PC-3 (cell line): ENCODE measurements at regions of chr1 and their contacts with region 1.

Region 1: GRCh38 chr1:211680752-211681327 is 5.4 kb upstream of the NEK2 start:
- DNase-seq: peak; percentile 94
- ATAC-seq: peak; percentile 90
- H3K4me3 ChIP-seq: no peak overlapping the region
- H3K27ac ChIP-seq: no peak overlapping the region
- H3K4me1 ChIP-seq: peaks cover 7% of the 10 kb centered on the region; the same call in 1 of the 2 replicates
- H3K27me3 ChIP-seq: no peaks in the 10 kb centered on the region
- CTCF ChIP-seq: peak; percentile 91

Region 2: GRCh38 chr1:211574705-211575104 is 106.1 kb before region 1 on chr1:
- CTCF ChIA-PET with region 1: no interaction called
- POLR2A ChIA-PET with region 1: no interaction called
- intact Hi-C with region 1: no loop called
- DNase-seq: peak; percentile 58
- ATAC-seq: no peak
- H3K4me3 ChIP-seq: peak overlapping the region; percentile 0; the same call in 1 of the 2 replicates
- H3K27ac ChIP-seq: no peak overlapping the region
- H3K4me1 ChIP-seq: peaks cover 31% of the 10 kb centered on the region
- H3K27me3 ChIP-seq: no peaks in the 10 kb centered on the region
- CTCF ChIP-seq: no peak

Region 3: DNA sequence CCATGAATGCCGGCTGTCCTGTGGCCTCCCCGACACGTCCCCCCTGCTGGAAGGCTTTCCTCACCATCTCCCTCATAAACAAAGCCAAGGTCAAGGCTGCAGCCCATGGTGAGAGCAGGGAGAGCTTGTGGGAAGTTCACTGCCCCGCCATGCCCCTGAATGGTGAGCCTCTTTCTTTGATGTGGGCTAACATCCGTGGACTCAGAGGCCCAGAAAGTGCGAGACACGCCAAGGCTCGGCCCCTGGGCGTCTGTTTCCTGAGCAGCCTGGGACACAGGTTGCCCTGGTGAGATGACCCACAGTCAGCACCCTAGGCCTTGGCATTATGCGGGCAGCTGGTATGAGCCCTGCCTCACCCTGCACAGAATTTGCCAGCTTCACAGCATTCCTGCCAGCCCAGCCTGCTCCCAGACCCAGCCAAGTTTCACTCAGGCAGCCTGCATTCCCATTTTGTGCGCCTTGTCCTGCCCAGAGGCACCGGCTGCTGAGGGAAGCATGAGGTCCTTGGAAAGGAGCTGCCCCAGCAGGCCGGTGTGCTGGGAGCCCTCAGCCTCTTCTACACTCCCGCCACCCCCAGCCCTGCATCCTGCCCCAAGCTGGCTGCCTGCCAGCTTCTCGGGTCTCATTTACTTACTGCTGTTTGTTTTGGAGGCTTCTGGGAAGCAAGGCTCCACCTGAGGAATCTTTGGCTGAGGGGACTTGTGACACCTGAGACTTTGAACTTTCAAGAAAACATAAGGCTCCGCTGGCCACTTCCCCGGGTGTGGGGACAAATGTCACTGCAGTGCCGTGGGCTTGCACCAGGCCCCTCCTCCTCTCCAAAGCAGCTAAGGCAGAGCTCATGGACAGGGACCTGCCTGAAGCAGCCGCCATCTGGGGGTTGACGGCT is 37.3 kb before region 1 on chr1:
- CTCF ChIA-PET with region 1: no interaction called
- POLR2A ChIA-PET with region 1: no interaction called
- intact Hi-C with region 1: no loop called
- DNase-seq: peak; percentile 70
- ATAC-seq: peak; percentile 59
- H3K4me3 ChIP-seq: no peak overlapping the region
- H3K27ac ChIP-seq: 0 out of 2 replicates have a peak overlapping the region, but pooled peaks have one; percentile 4
- H3K4me1 ChIP-seq: peaks cover 34% of the 10 kb centered on the region
- H3K27me3 ChIP-seq: no peaks in the 10 kb centered on the region
- CTCF ChIP-seq: no peak

Region 4: GRCh38 chr1:211830330-211831142 is 149.7 kb after region 1 on chr1 and contains the start of gene LPGAT1:
- CTCF ChIA-PET with region 1: no interaction called
- POLR2A ChIA-PET with region 1: no interaction called
- intact Hi-C with region 1: loop called (anchors 1 kb)
- DNase-seq: peak; percentile 79
- ATAC-seq: peak; percentile 91
- H3K4me3 ChIP-seq: peak within 1 kb of the TSS; percentile 84
- H3K27ac ChIP-seq: no peak within 1 kb of the TSS
- H3K4me1 ChIP-seq: peaks cover 13% of the 10 kb centered on the region; the same call in 1 of the 2 replicates
- H3K27me3 ChIP-seq: no peaks in the 10 kb centered on the region
- CTCF ChIP-seq: peak; percentile 69
- total RNA-seq, gene LPGAT1: 39.8 and 41.7 TPM in 2 replicates

Region 5: DNA sequence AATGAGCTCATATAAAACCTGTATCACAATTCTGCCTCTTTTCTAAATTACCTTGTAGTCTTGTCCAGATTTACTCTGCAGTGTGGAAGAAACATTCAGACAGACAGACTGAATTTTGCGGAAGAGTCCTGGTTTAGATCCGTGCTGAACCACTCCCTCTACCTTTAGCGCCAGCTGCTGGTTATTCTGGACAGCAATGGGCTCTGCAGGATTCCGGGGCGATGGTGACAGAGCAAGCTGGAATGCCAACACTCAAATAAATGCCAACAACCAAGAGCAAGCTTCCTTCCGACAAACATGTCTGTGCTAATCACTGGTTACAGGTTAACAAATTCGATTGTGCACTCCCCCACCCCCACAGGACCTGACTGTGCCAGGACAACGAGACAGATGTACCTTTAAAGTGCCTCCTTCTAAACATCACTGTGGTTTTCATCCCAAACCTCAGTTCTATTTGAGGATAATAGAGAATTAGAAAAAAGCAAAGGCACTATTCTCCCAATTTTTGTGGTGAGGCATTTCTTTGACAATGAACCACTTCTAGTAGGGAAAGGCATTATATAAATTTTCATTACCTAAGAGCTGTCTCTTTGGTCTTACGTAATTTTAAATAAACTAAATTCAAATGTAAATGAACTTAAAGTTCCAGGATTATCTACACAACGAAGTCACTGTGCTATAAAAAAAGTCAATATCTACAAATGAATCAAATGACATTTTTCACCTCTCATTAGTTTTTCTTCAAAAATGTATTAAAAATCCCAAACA is 264.1 kb after region 1 on chr1:
- CTCF ChIA-PET with region 1: interaction called, 15 read pairs
- POLR2A ChIA-PET with region 1: no interaction called
- intact Hi-C with region 1: loop called (anchors 1 kb)
- DNase-seq: peak; percentile 95
- ATAC-seq: peak; percentile 100
- H3K4me3 ChIP-seq: no peak overlapping the region
- H3K27ac ChIP-seq: no peak overlapping the region
- H3K4me1 ChIP-seq: peaks cover 10% of the 10 kb centered on the region
- H3K27me3 ChIP-seq: no peaks in the 10 kb centered on the region
- CTCF ChIP-seq: peak; percentile 99

Region 6: DNA sequence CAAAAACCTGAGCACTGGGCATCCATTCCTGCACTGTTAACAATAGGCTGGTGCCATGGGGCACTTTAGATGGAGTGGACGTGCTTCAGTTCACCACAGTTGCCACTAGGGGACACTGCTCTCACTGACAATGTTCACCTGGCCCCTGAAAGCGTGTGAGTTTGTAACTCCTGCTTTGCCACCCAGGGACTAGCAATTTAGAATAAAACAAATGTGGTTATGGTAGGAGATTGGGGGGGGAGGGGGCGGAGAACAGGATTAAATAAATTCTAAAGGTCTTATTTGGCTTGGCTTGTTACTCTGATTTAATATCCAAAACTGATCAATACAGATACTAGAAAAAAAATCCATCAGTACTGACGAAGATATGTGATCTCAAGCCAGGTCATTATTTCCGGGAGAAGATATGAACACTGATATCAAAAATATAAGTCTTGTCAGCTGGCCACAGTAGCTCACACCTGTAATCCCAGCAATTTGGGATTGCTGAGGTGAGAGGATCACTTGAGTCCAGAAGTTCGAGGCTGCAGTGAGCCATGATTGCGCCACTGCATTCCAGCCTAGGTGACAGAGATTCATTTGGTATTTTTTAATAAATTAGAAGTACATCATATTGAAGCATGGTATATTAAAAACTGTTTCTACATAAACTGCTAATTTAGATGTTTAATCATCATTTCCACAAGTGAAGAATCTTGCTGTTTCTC is 331.3 kb after region 1 on chr1:
- CTCF ChIA-PET with region 1: no interaction called
- POLR2A ChIA-PET with region 1: no interaction called
- intact Hi-C with region 1: loop called (anchors 1 kb)
- DNase-seq: peak; percentile 89
- ATAC-seq: peak; percentile 97
- H3K4me3 ChIP-seq: no peak overlapping the region
- H3K27ac ChIP-seq: no peak overlapping the region
- H3K4me1 ChIP-seq: peaks cover 3% of the 10 kb centered on the region; the same call in 1 of the 2 replicates
- H3K27me3 ChIP-seq: no peaks in the 10 kb centered on the region
- CTCF ChIP-seq: peak; percentile 99

Region 7: GRCh38 chr1:212291505-212292134 is 610.8 kb after region 1 on chr1:
- CTCF ChIA-PET with region 1: no interaction called
- POLR2A ChIA-PET with region 1: no interaction called
- intact Hi-C with region 1: loop called (anchors 5 kb)
- DNase-seq: peak; percentile 84
- ATAC-seq: peak; percentile 52
- H3K4me3 ChIP-seq: no peak overlapping the region
- H3K27ac ChIP-seq: no peak overlapping the region
- H3K4me1 ChIP-seq: peaks cover 45% of the 10 kb centered on the region
- H3K27me3 ChIP-seq: no peaks in the 10 kb centered on the region
- CTCF ChIP-seq: peak; percentile 99

Region 8: DNA sequence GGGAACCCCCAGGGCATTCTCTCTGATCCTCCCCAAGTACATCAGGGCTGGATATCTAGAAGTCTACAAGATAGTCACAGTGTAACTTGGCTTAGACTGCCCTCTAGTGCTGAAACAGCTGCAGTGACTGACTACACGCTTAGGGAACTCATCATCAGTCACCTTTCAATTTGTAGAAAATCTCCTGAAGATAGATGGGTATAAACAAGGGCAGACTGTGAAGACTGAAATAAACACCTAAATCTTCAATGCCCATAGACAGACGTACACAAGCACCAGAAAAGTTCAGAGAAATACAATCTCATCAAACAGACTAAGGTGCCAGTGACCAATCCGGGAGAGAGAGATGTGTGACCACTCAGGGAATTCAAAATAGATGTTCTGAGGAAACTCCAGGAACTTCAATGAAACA is 687.2 kb after region 1 on chr1:
- CTCF ChIA-PET with region 1: no interaction called
- POLR2A ChIA-PET with region 1: no interaction called
- intact Hi-C with region 1: loop called (anchors 10 kb)
- DNase-seq: peak; percentile 94
- ATAC-seq: peak; percentile 99
- H3K4me3 ChIP-seq: no peak overlapping the region
- H3K27ac ChIP-seq: no peak overlapping the region
- H3K4me1 ChIP-seq: no peaks in the 10 kb centered on the region
- H3K27me3 ChIP-seq: no peaks in the 10 kb centered on the region
- CTCF ChIP-seq: peak; percentile 99